Activated CD4-positive, alpha-beta memory T cell treated with anti-CD3 and anti-CD28 coated beads, Interleukin-2, amount 10 ng/mL, durations not matched to agents 7 days and 5 days (primary cell): ENCODE measurements at regions of chr2 and their contacts with region 1.

Region 1: DNA sequence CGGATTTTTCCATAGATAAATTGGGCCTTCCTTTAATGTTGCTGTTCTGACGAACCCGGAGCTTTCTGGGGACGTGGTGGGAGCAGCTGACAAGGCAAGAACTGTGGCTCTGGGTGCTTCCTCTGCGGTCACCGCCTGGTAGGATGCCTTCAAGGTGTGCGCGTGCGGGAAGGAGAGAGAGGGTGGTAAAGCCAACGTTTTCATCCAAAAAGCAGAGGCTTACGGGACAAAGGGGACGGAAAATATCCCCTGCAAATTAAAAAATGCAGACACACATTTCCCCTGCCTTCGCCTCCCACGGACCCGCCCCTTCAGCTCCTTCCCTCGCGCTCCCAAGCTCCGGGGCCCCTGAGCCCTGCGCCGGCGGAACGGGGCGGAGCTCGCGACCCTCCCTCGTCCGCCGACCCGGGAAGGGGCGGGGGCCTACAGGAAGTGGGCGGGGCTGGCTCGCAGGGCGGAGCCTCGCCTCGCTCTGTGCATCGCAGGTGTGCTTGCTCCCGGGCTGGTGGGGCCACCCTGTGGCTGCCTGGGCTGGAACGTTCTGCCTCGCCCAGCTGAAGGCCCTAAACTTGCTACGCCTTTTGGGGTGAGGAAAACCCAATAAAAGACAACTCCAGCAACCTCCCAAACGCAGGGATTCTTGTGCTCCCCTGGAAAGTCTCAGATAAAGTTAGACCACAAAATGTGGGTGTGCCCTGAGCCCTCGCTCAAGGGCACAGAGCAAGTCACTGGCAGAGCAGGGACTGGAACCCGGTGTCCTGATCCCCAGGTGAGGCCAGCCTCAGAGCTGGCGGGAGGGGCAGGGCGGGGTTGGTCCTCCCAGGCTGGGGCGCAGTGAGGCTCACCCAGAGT is 25.4 kb upstream of the SLC66A3 start:
- DNase-seq: peak; percentile 80
- H3K4me3 Mint-ChIP-seq: peak overlapping the region; percentile 62
- H3K27ac Mint-ChIP-seq: no peak overlapping the region
- H3K4me1 Mint-ChIP-seq: peaks cover 33% of the 10 kb centered on the region
- H3K27me3 Mint-ChIP-seq: peaks cover 16% of the 10 kb centered on the region

Region 2: DNA sequence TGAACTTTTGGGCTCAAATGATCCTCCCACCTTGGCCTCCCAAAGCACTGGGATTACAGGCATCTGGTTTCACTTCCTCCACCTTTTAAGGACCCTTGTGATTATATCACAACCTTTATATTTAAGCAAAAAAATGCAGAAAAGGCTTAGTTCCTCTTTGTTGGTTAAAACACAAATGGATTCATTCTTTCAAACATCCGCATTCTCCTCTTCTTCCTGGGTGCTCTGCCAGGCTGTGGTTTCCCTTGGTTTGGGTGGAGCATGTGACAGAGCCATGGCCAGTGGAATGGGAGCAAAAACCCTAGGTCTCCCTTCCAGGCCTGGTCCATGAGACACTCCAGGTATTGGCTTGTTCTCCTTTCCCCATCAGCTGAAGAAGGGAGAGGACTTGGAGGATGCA is 15.5 kb after region 1 on chr2:
- CTCF ChIA-PET with region 1: interaction called, 23 read pairs
- POLR2A ChIA-PET with region 1: interaction called, 3 read pairs
- DNase-seq: no peak
- H3K4me3 Mint-ChIP-seq: no peak overlapping the region
- H3K27ac Mint-ChIP-seq: no peak overlapping the region
- H3K4me1 Mint-ChIP-seq: no peaks in the 10 kb centered on the region
- H3K27me3 Mint-ChIP-seq: peaks cover 14% of the 10 kb centered on the region

Region 3: GRCh38 chr2:11160731-11161455 is 31.1 kb after region 1 on chr2:
- CTCF ChIA-PET with region 1: interaction called, 12 read pairs
- POLR2A ChIA-PET with region 1: interaction called, 14 read pairs
- DNase-seq: peak; percentile 39
- H3K4me3 Mint-ChIP-seq: peak overlapping the region; percentile 64
- H3K27ac Mint-ChIP-seq: peak overlapping the region; percentile 96
- H3K4me1 Mint-ChIP-seq: peaks cover 29% of the 10 kb centered on the region
- H3K27me3 Mint-ChIP-seq: no peaks in the 10 kb centered on the region

Region 4: DNA sequence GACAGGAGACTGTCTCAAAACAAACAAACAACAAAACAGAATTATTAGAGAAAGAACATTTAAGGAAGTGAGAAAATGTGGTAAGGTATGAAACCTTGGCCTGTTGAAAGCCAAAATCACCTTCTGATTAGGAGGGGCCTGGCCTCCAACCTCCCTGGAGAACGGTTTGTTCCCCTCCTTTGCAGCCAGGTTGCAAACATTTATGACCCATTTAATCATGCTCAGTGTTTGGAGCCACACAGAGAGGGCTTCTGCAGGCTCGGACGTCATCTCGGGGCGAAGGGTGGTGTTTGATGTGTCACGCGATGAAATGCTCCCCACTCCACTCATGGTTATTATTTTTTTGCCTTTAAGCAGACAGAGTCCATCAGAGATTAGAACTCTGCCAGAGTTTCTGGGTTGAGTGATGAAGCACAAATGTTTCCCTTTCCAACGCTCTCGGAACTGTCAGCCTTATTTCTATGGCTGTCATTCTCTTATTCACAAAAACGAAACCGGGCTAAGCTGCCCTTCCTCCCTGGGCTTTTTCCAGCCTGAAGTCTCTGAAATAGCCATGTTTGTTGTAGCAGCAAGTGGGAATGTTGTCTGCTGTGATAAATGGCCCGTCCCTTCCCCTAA is 248.2 kb after region 1 on chr2:
- CTCF ChIA-PET with region 1: no interaction called
- POLR2A ChIA-PET with region 1: no interaction called
- DNase-seq: no peak
- H3K4me3 Mint-ChIP-seq: no peak overlapping the region
- H3K27ac Mint-ChIP-seq: no peak overlapping the region
- H3K4me1 Mint-ChIP-seq: peaks cover 2% of the 10 kb centered on the region
- H3K27me3 Mint-ChIP-seq: no peaks in the 10 kb centered on the region

Region 5: GRCh38 chr2:11417946-11418585 is 288.2 kb after region 1 on chr2:
- CTCF ChIA-PET with region 1: interaction called, 12 read pairs
- POLR2A ChIA-PET with region 1: no interaction called
- DNase-seq: no peak
- H3K4me3 Mint-ChIP-seq: no peak overlapping the region
- H3K27ac Mint-ChIP-seq: no peak overlapping the region
- H3K4me1 Mint-ChIP-seq: no peaks in the 10 kb centered on the region
- H3K27me3 Mint-ChIP-seq: peaks cover 5% of the 10 kb centered on the region

Region 6: DNA sequence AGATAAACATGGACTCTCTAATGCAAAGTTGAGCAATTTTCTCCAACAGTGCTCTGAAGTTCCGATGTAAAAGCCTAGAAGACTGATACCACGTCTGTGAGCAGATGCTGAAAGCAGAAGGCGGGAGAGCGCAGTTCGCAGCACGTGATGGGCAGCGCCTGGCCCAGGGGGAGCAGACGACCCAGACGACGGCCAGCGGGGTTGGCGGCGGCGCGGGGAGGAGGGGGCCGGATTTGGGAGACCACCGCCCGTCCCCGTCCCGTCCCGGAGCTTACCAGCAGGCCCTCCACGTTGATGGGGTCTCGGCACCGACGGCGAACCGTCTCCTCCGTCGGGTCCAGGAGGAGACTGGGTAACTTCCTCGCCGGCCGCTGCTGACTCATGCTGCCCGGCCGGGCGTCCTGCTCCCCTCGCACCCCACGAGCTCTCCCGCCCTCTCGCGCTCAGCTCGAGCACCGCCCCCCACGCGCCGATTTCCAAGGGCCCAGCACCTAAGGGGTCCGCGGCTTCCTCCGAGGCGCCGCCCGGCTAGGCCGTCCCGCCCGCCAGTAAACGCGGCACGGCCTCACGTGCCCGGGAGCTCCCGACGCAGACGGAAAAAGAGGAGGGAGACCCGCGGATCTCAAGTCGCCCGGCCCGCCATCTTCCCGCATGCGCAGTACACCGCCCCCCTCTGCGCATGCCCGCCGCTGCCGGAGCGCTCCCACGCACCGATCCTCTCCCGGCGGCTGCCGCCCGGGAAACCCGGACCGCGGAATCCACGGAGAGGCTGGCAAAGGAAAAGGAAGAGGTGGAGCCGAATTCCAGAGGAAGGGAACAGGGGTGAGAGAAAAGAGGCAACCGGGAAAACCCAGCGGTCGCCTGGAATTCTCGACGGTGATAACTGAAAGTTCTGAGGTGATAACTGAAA is 335.9 kb after region 1 on chr2 and contains the start of gene E2F6:
- CTCF ChIA-PET with region 1: interaction called, 20 read pairs
- POLR2A ChIA-PET with region 1: interaction called, 3 read pairs
- DNase-seq: peak; percentile 85
- H3K4me3 Mint-ChIP-seq: peak within 1 kb of the TSS; percentile 93
- H3K27ac Mint-ChIP-seq: peak within 1 kb of the TSS; percentile 81
- H3K4me1 Mint-ChIP-seq: peaks cover 32% of the 10 kb centered on the region
- H3K27me3 Mint-ChIP-seq: no peaks in the 10 kb centered on the region
- total RNA-seq, gene E2F6: 5.9 to 6.6 TPM